Activated CD4-positive, alpha-beta T cell treated with anti-CD3 and anti-CD28 coated beads for 36 hours (primary cell): ENCODE measurements at regions of chr7 and their contacts with region 1.

Region 1: DNA sequence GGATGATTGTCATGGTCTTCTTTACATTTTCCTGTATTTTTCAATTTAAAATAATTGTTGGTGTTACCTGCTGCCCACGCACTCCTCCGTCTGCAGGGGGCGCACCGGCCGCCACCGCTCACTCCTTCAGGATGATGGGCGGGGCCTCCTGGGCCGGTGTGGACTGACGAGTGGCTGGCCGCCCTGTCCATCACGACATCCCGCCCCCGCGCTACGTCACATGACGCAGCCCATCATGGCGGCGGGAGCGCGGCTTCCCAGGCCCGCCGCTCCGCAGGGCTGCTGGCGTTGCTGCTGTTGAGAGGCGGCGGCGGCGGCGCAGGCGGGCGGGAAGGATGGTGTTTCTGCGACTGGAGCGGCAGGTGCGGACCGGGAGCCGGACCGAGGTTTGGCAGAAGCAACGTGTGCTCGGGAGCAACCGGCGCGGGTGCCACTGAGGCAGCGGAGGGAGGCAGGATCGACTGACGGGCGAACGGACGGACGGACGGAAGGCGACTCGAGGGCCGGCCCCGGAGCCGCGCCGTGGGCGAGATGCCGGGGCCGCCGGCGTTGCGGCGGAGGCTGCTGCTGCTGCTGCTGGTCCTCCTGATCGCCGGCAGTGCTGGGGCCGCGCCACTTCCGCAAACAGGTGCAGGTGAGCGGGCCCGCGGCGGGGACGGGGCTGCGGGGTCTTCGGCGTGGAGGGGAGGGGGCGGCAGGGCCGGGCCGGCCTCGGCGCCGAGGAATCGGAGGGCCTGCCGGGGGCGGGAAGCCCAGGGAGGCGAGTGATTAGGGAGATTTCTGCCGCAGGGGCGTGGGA is at the start of gene LMTK2:
- DNase-seq: peak; percentile 98
- ATAC-seq: peak; percentile 100
- H3K4me3 Mint-ChIP-seq: peak within 1 kb of the TSS; percentile 95
- H3K27ac Mint-ChIP-seq: peak within 1 kb of the TSS; percentile 90
- H3K4me1 Mint-ChIP-seq: peaks cover 31% of the 10 kb centered on the region
- H3K27me3 Mint-ChIP-seq: peaks cover 6% of the 10 kb centered on the region
- total RNA-seq, gene LMTK2: 10.0 to 16.9 TPM

Region 2: DNA sequence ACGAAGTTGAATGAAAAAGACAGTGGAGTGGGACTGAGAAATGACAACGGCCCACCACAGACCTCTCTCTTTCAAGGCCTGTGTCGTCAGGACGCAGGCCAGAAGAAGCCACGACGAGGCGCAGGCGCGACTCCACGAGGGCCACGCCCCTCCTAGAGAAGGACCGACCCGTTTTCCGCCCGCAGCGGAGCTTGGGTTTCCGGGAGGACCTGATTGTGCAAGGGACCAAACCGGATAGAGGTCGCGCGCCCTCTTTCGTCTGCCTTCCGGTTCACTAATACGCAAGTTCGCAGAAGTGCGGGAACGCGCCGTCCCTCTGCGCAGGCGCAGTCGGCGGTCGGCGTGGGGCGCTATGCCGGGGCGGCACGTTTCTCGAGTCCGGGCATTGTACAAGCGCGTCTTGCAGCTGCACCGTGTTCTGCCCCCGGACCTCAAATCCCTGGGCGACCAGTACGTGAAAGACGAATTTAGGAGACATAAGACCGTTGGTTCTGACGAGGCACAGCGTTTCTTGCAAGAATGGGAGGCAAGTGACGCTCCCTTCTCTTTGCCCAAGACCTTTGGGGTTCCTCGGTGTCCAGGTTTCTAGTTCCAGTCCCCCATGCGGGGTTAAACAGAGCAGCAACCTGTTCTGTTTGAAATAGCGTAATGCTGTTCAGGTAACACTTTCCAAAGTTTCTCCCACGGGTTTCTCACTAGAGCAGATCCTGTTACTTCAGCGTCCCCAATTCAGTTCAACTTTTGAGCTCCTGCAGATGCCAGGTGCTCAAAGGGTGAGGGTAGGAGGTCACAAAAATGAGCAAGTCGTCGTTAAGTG is 989.3 kb before region 1 on chr7 and contains the start of gene SDHAF3:
- CTCF ChIA-PET with region 1: no interaction called
- POLR2A ChIA-PET with region 1: no interaction called
- intact Hi-C with region 1: loop called in 1 of 2 experiments (anchors 2 kb)
- DNase-seq: peak; percentile 99
- ATAC-seq: peak; percentile 95
- H3K4me3 Mint-ChIP-seq: peak within 1 kb of the TSS; percentile 82
- H3K27ac Mint-ChIP-seq: peak within 1 kb of the TSS; percentile 95
- H3K4me1 Mint-ChIP-seq: peaks cover 38% of the 10 kb centered on the region
- H3K27me3 Mint-ChIP-seq: no peaks in the 10 kb centered on the region
- total RNA-seq, gene SDHAF3: 30.2 to 44.3 TPM

Region 3: GRCh38 chr7:97971990-97972943 is 134.6 kb before region 1 on chr7:
- CTCF ChIA-PET with region 1: no interaction called
- POLR2A ChIA-PET with region 1: no interaction called
- intact Hi-C with region 1: loop called (anchors 1 to 2 kb)
- DNase-seq: peak; percentile 93
- ATAC-seq: peak; percentile 97
- H3K4me3 Mint-ChIP-seq: peak overlapping the region; percentile 98
- H3K27ac Mint-ChIP-seq: peak overlapping the region; percentile 97
- H3K4me1 Mint-ChIP-seq: peaks cover 19% of the 10 kb centered on the region
- H3K27me3 Mint-ChIP-seq: no peaks in the 10 kb centered on the region

Region 4: GRCh38 chr7:98133181-98133580 is 26.3 kb after region 1 on chr7:
- CTCF ChIA-PET with region 1: interaction called, 5 read pairs
- POLR2A ChIA-PET with region 1: interaction called, 4 read pairs
- intact Hi-C with region 1: loop called (anchors 2 kb)
- DNase-seq: peak; percentile 19
- ATAC-seq: peak; percentile 54
- H3K4me3 Mint-ChIP-seq: no peak overlapping the region
- H3K27ac Mint-ChIP-seq: no peak overlapping the region
- H3K4me1 Mint-ChIP-seq: peaks cover 50% of the 10 kb centered on the region
- H3K27me3 Mint-ChIP-seq: no peaks in the 10 kb centered on the region

Region 5: DNA sequence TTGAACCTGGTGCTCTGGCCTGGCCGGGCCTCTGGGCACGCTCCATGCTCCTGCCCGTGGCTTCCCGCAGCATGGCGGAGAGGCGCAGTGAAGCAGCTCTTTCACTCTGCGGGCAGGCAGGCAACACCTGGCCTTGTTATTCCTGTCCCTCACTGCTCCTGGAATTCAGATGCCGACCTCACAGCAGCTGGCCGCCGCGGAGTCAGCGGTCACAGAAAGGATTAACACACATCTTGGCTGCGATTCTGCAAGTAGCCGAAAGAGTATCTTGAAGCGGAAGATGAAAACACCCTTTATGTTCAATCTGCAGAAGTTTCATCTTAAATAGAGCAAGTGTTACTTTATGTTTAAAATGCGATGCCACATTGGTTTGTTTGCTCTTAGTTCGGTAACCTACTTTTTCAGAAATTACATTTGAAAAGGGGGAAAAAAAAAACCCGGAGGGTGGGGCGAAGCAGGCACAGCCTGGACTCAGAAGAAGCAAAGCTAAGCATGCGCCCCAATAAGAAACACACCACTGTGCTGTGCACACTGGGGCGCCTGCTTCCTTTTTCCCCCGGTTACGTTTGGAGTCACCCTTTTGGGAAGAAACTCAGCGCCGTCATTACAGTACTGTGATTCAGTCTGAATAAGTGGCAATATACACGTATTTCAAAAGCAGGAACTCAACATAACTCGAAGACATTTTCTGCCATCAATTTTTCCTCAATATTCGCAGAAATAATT is 216.9 kb after region 1 on chr7:
- CTCF ChIA-PET with region 1: no interaction called
- POLR2A ChIA-PET with region 1: no interaction called
- intact Hi-C with region 1: no loop called
- DNase-seq: peak; percentile 13
- ATAC-seq: peak; percentile 58
- H3K4me3 Mint-ChIP-seq: no peak overlapping the region
- H3K27ac Mint-ChIP-seq: no peak overlapping the region
- H3K4me1 Mint-ChIP-seq: no peaks in the 10 kb centered on the region
- H3K27me3 Mint-ChIP-seq: peaks cover 14% of the 10 kb centered on the region

Region 6: DNA sequence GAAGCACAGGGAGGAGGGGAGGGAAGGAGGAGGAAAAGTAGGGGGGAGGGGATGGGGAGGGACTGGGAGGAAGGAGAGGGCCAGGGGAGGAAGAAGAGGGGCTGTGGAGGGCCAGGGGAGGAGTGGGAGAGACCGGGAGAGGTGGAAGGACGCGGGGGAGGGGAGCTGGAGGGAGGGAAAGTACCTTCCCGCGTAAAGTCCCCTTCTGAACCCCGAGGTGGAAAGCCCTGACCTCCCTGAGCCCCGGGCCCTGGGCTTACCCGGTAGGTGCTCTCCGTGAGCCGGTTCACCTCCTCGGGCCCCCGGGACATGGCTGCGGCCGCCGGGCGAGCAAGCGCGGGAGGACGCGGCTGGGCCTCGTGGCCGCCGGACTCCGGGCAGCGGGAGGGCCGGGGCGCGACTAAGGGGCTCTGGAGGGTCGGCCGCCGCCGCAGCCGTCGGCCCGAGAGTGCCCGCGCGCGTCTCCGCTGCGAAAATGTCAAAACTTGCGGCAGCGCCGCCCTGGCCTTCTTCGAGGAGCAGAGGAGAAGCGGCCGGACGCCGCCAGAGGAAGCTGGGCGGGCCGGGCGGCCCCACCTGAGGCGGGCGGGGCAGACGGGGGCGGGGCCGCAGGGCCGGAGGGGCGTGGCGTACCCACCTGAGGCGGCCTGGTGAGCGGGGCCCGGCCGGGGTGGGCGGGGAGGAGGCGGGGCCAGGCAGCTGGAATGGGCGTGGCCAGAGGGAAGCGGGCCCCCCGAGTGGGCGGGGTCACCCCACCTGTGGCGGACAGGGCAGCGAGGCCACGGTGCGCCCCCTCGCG is 293.9 kb after region 1 on chr7 and contains the start of gene BAIAP2L1:
- CTCF ChIA-PET with region 1: no interaction called
- POLR2A ChIA-PET with region 1: no interaction called
- intact Hi-C with region 1: loop called in 1 of 2 experiments (anchors 1 kb)
- DNase-seq: peak; percentile 93
- ATAC-seq: peak; percentile 89
- H3K4me3 Mint-ChIP-seq: peak within 1 kb of the TSS; percentile 21
- H3K27ac Mint-ChIP-seq: no peak within 1 kb of the TSS
- H3K4me1 Mint-ChIP-seq: peaks cover 7% of the 10 kb centered on the region
- H3K27me3 Mint-ChIP-seq: peaks cover 20% of the 10 kb centered on the region
- total RNA-seq, gene BAIAP2L1: 2.3 to 3.0 TPM

Region 7: GRCh38 chr7:98420966-98421612 is 314.2 kb after region 1 on chr7:
- CTCF ChIA-PET with region 1: no interaction called
- POLR2A ChIA-PET with region 1: no interaction called
- intact Hi-C with region 1: no loop called
- DNase-seq: peak; percentile 80
- ATAC-seq: peak; percentile 60
- H3K4me3 Mint-ChIP-seq: no peak overlapping the region
- H3K27ac Mint-ChIP-seq: no peak overlapping the region
- H3K4me1 Mint-ChIP-seq: no peaks in the 10 kb centered on the region
- H3K27me3 Mint-ChIP-seq: peaks cover 8% of the 10 kb centered on the region